Dorsolateral prefrontal cortex (tissue), 120 donors: ENCODE measurements at regions of chr4 and their contacts with region 1.

Region 1: GRCh38 chr4:144174401-144175067 is 34.0 kb upstream of the GYPA start:
- DNase-seq: no peak
- H3K4me3 ChIP-seq: no peak overlapping the region
- H3K27ac ChIP-seq: no peak overlapping the region
- H3K27me3 ChIP-seq: no peaks in the 10 kb centered on the region
- CTCF ChIP-seq: peak; percentile 52 to 89 (median 70)

Region 2: DNA sequence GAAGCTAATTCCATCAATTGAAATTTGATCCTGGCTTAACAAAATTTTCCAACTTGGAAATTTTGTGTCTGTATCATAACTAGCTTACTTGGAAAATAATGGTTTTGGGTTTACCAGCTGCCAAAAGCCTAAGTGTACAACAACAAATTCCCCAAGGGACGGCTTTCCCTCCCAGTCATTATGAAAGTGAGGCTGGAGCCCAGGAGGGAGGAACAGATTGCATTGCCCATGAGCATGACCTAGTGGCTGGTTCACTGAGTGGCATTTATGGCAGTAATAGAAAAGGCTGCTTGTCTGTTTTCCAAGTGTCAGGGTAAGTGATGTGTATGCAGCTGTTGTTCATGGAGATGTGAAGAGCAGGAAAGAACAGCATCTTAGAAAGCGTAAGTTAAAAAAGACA is 400.6 kb after region 1 on chr4:
- intact Hi-C with region 1: loop called in 1 of 2 experiments (anchors 5 kb)
- DNase-seq: peak in 3 of 10 donors; percentile 6 to 40 (median 36)
- H3K4me3 ChIP-seq: no peak overlapping the region
- H3K27ac ChIP-seq: peak overlapping the region in 1 of 59 donors; percentile 23
- H3K27me3 ChIP-seq: no peaks in the 10 kb centered on the region
- CTCF ChIP-seq: peak in 37 of 56 donors; percentile 12 to 63 (median 35)

Region 3: DNA sequence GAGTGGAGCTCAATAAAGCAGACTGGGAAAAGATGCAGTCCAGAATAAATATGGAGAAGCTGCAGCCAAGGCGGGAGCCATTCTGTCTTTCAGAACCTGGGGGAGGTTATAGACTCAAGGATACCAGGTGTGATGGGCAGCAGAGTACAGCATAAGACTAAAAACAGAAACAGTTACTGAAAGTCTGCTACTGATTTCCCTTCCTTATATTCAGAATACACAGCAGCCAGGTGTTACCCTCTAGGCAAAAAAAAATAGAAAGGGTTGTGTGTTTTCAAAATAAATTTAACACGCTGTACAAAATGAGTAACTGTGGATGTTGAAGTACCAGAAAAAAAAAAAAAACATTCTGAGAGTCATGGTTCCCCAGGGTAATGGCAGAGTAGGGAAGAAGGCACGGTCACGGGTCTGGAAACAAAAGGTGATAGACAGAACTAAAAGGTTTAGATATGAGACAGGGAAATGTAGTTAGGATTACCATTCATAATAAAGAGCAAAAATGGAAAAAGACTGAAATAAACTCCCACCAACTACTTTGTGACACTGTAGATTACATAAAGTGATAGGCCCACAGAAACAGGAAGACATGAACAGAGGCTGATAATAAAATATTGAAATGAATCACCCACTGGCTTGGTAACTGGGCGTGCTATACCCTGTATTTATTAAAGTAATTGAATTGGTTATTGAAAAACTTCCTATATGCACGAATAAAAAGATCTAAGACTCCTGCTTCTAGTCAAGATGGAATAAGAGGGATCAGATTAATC is 460.6 kb after region 1 on chr4:
- intact Hi-C with region 1: no loop called
- DNase-seq: no peak
- H3K4me3 ChIP-seq: no peak overlapping the region
- H3K27ac ChIP-seq: no peak overlapping the region
- H3K27me3 ChIP-seq: no peaks in the 10 kb centered on the region
- CTCF ChIP-seq: no peak

Region 4: DNA sequence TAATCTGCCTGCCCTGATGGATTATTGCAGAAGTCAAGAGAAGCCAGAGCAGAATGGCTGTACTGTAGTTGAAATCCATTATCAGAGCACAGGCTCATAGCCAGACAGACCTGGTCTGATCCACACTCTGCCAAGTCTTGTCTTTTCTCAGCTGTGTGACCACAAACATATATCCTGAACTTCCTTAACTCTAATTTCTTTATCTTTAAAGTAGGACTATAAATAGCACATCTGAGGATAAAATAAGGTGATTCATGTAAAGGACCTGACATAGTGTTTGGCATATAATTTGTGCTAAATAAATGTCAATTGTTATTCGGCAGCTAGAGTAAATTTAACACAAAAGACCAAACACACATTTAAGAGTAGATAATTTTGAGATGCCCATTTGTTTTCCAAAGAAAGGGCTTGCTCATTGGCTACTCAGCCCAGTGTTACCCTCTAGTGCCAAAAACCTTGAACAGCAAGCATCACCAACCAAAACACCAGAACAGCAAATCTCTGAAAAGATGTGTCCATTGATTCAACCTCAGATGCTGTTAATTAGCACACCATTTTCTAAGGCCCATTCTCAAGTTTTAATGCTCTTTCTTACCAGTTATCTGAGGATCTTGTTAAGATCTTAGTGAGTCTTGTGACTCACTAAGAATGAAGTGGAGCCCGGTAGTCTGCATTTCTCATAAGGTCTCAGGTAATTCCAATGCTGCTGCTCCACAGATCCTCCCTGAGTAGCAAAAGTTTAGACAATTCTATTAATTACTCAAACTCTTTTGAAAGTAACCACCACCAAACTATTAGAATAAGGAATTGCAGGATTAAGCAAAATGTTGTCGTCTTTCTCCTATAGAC is 580.3 kb after region 1 on chr4:
- intact Hi-C with region 1: loop called in 1 of 2 experiments (anchors 10 kb)
- DNase-seq: peak in 1 of 10 donors; percentile 15
- H3K4me3 ChIP-seq: no peak overlapping the region
- H3K27ac ChIP-seq: peak overlapping the region in 6 of 59 donors; percentile 4 to 60 (median 20)
- H3K27me3 ChIP-seq: no peaks in the 10 kb centered on the region
- CTCF ChIP-seq: peak in 55 of 56 donors; percentile 24 to 78 (median 58)

Region 5: DNA sequence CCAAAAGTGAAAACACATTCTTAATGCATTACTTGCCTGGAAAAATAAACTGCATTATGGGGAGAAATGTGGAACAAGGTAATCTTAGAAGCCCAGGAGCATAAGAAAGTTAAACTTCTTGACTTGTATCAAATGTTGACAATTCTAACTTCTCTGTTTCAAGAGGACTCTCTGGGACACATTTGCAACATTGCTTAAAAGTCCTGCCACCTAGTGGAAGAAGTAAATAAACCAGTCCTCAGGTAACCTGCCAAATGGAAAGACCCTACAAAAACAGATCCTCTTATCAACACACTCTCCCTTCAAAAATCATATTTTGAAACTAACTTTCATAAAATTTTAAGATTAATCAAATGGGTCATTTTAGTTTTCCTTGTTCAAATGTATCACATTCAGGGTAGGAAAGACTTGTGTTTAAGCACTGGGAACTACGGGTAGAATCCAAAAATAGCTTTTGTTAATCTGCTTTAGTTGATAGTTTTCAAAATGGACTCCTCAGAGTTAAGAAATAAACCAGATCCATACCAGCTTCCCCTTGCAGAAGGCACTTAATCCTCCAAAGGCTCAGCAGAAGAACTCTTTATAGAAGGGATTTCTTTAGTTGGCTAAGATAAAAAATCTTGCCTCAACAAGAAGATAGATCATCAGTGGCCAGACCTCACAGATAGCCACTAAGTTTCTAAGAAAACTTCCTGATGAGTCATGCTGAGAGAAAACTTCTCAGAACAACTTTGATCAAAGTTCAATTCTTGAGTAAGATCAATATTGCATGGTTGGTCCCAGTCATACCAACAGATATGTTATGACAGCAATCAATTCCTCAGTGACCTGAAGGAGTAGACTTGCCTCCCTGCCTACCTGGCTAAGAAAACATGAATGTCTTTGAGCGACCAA is 613.1 kb after region 1 on chr4:
- intact Hi-C with region 1: loop called in 1 of 2 experiments (anchors 5 kb)
- DNase-seq: no peak
- H3K4me3 ChIP-seq: no peak overlapping the region
- H3K27ac ChIP-seq: no peak overlapping the region
- H3K27me3 ChIP-seq: no peaks in the 10 kb centered on the region
- CTCF ChIP-seq: peak; percentile 41 to 81 (median 64)

Region 6: GRCh38 chr4:145061318-145061920 is 886.9 kb after region 1 on chr4:
- intact Hi-C with region 1: loop called in 1 of 2 experiments (anchors 5 kb)
- DNase-seq: no peak
- H3K4me3 ChIP-seq: no peak overlapping the region
- H3K27ac ChIP-seq: no peak overlapping the region
- H3K27me3 ChIP-seq: no peaks in the 10 kb centered on the region
- CTCF ChIP-seq: peak; percentile 35 to 81 (median 61)